AG04449 (cell line): ENCODE measurements at regions of chr1 and their contacts with region 1.

Region 1: GRCh38 chr1:235415008-235415904 is 48.0 kb downstream of the TBCE start:
- DNase-seq: peak; percentile 33
- H3K4me3 ChIP-seq: no peak overlapping the region
- CTCF ChIP-seq: peak; percentile 78

Region 2: GRCh38 chr1:235199441-235199840 is 215.8 kb before region 1 on chr1:
- CTCF ChIA-PET with region 1: interaction called, 56 read pairs
- POLR2A ChIA-PET with region 1: no interaction called
- DNase-seq: no peak
- H3K4me3 ChIP-seq: no peak overlapping the region
- CTCF ChIP-seq: peak; percentile 25

Region 3: DNA sequence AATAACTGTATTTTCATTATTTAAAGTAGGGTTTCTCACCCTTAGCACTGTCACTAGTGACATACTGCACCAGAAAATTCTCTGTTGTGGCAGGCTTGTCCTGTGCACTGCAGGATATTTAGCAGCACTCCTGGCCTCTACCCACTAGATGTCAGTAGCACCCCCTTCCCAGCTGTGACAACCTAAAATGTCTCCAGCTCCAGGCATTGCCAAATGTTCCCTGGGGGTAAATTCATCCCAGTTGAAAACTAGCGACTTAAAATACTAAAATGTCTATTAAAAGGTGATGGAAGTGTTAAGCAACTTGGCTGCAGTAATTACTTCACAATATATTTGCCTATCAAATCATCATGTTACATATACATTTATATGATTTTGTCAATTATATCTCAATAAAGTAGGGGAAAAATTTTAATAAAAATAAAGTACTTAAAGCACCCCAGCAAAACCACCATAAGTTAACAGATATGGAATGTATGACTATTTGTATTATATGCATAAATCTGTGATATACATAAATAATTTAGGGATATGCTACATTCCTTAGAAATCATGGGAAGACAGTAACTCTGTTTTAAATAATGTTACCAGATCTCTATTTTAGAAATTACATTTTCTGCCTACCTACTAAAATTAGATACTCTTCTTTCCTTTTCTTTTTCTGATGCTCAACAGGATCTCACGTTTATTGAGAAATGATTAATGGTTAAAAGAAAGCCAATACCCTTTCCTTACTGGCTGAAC is 161.9 kb before region 1 on chr1:
- CTCF ChIA-PET with region 1: interaction called, 69 read pairs
- POLR2A ChIA-PET with region 1: no interaction called
- DNase-seq: no peak
- H3K4me3 ChIP-seq: no peak overlapping the region
- CTCF ChIP-seq: peak; percentile 74

Region 4: GRCh38 chr1:235270625-235271024 is 144.6 kb before region 1 on chr1:
- CTCF ChIA-PET with region 1: interaction called, 16 read pairs
- POLR2A ChIA-PET with region 1: no interaction called
- DNase-seq: no peak
- H3K4me3 ChIP-seq: no peak overlapping the region
- CTCF ChIP-seq: no peak

Region 5: DNA sequence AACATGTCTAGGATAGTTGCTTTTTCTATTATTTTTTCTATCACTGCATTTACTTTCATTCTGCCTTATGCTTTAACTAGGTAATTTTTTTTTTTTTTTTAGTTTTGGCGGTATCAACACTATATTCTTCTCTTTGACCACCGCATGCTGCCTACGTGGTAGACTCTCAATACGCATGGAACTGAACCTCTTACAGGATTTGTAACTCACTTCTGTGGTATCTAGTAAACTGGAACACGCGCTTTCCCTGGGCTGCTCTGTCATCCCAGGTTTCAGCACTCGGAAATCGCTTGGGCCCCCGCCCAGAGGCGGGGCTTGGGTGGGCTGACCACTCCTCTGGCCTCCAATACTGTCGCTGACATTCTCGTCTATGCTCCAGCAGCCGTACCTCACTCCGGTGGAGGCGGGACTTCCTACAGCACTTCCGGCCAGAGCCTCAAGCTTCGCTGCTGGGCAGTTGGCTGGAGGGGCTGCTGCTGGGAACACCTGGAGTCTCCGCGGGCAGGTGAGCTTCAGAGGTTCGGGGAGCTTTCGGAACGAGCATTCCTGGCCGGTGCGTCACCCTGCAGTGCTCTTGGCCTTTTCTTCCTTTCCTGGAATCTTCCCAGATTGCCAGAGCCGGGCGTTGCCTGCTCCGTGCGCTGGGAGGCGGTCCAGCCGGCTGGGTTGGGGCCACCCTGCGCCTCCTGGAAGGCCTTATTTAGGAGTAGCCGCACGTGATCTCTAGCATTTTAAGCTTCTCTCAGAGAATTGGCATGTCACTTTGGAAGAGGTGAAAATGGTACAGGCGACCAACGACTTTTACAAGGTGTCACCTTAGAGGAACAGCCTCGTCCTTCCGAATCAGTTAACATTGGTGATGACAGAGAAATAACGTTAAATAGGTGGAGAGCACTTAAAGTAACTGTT is 48.0 kb before region 1 on chr1 and contains the start of gene TBCE:
- CTCF ChIA-PET with region 1: no interaction called
- POLR2A ChIA-PET with region 1: no interaction called
- DNase-seq: peak; percentile 81
- H3K4me3 ChIP-seq: peak within 1 kb of the TSS; percentile 85
- CTCF ChIP-seq: peak; percentile 12

Region 6: DNA sequence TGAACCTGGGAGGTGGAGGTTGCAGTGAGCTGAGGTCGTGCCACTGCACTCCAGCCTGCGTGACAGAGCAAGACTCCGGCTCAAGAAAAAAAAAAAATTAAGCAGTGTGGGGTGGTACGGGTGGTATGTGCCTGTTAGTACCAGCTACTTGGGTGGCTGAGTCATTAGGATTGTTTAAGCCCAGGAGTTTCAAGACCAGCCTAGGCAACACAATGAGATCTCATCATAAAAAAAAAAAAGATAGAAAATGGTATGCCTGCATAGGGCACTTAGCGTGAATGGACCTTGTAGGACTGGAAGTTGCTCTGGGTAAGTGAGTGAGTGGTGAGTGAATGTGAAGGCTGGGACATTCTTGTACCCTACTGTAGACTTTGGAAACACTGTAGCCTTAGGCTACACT is 11.1 kb before region 1 on chr1:
- CTCF ChIA-PET with region 1: interaction called, 52 read pairs
- POLR2A ChIA-PET with region 1: no interaction called
- DNase-seq: no peak
- H3K4me3 ChIP-seq: no peak overlapping the region
- CTCF ChIP-seq: no peak

Region 7: GRCh38 chr1:235567812-235568503 is 152.7 kb after region 1 on chr1:
- CTCF ChIA-PET with region 1: no interaction called
- POLR2A ChIA-PET with region 1: no interaction called
- DNase-seq: no peak
- H3K4me3 ChIP-seq: no peak overlapping the region
- CTCF ChIP-seq: no peak

Region 8: GRCh38 chr1:235708390-235708962 is 293.2 kb after region 1 on chr1:
- CTCF ChIA-PET with region 1: no interaction called
- POLR2A ChIA-PET with region 1: no interaction called
- DNase-seq: peak; percentile 45
- H3K4me3 ChIP-seq: no peak overlapping the region
- CTCF ChIP-seq: no peak